ENCODE measurements at regions of chr7 and their contacts with region 1.

Region 1: GRCh38 chr7:128135515-128136214 is 104.4 kb upstream of the LRRC4 start:
- DNase-seq: peak; percentile 59
- ATAC-seq: peak; percentile 95 to 96

Region 2: GRCh38 chr7:127708788-127709187 is 426.9 kb before region 1 on chr7:
- intact Hi-C with region 1: loop called in 1 of 2 experiments (anchors 10 kb)
- DNase-seq: peak; percentile 71
- ATAC-seq: peak; percentile 78 to 85

Region 3: DNA sequence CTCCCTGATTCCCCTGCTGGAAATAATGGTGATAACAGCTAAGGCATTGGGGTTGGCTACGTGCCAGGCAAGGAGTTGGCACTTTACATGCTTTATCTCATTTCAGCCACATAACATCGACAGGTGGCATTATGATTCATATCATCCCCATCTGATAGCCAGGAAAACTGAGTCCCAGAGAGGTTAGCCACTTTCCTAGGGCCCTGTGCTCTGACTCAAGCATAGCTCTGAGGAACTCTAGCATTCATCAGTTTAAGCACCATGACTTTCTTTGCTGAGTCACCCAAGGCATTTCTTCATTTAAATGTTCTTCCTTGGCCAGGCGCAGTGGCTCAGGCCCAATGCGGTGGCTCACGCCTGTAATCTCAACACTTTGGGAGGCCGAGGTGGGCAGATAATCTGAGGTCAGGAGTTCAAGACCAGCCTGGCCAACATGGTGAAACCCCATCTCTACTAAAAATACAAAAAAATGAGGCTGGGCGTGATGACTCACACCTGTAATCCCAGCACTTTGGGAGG is 112.1 kb after region 1 on chr7:
- intact Hi-C with region 1: no loop called
- DNase-seq: no peak
- ATAC-seq: no peak